ENCODE measurements at regions of chr3 and their contacts with region 1.

Region 1: GRCh38 chr3:108073764-108074431 is 16.9 kb downstream of the CD47 start:
- DNase-seq: no peak

Region 2: DNA sequence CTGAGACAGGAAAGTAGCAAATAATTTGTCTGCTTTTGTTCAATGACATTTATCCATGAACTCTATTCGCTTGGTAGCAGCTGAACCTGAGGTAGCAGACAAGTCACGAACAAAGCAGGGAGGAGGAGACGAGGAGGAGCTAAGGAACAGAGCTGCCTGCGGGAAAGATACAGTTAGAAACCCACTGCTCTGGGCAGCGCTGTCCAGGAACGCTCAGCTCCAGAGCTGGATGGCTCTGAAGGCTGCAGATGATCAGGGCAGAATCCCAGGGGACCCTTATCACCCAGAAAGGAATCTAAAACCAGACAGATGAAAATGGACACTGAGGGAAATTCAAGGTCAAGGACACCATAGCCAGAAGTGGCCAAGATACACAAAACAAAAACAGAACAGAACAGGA is 240.9 kb before region 1 on chr3:
- in situ Hi-C with region 1: loop called (anchors 10 kb)
- DNase-seq: no peak

Region 3: DNA sequence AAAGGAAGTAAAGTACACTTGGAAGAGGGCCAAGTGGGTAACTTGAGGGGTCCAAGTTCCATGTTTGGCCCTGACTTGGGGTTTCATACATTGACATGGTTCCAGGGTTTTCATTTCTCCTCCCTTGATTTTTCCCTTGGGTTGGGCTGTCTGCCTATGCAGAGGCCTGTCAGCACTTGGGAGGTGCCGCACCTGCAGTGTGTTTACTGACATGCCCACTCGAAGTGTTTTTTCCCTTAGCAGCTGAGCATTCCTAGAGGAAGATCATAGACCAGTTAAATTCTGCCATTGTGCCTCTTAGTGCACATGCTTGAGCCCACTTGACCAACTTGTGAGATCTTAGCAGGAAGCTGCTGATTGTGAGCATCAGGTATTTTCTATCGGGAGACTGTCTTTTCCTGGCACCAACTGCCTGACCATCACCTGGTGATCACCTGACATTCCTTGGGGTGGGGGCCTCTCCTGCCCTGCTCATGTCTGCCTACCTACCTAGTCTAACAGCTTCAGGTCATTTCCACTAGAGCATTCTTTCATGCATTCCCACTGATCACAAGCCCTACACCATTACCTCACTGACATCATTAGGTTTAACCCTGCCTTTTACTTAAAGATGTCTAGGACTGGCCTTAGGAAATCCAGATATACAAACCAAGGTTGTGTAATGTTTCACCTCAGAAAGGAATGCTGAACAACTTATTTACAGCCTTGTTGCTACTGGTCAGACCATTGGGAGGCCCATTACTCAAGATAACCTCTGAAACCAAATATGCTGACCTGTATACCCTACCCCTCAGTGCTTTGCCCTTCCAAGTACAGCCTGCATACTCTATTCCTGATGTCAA is 51.4 kb before region 1 on chr3:
- in situ Hi-C with region 1: no loop called
- DNase-seq: no peak

Region 4: DNA sequence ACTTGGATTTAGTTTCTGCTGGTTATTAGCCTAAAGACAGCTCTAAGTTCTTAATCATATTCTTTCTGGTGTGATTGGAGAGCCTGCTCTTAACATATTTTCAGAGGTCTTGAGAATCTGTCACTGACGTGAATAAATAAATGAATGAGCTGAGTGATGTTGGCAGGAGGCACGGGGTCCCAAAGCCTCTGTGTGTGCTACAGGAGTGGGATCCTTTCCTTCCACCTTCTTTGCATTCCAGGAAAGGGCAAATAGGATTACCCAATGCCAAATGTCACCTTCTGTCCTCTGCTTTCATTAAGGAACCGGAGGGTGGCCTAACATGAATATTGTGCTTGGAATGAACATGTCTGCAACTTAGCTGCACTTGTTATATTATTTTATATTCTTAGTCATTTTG is 36.1 kb before region 1 on chr3:
- in situ Hi-C with region 1: no loop called
- DNase-seq: peak; percentile 53

Region 5: DNA sequence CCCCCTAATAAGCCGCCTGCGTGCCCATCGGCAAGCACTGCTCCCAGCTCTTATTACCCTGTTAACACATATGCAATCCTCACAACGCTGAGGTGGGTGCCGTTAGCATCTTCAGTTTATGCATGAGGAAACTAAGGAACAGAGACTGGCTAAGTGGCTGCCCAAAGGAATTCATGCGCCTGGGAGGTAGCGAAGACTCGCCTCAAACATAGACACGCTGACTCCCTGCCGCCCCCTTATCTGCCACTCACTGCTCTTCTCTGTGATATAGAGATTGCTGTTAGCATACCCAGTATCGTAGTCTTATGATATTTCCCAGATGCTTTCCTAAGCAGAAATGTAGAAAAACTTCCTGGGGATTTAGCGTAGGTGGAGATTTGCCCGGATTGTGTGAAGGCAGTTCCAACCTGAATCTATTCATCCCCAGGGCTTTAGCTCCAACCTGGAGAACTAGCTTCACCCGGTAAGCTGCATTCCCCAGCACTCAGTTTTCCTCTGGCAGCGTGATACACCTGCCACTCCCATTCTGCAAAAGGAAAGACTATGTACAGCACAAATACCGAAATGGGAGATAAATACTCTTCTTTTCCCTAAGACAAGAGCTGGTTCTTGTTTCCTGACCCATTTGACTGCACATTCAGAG is 40.6 kb after region 1 on chr3:
- in situ Hi-C with region 1: no loop called
- DNase-seq: no peak

Measured in G401 (cell line).